Endothelial cell of umbilical vein (primary cell): ENCODE measurements at regions of chr5 and their contacts with region 1.

Region 1: GRCh38 chr5:76582230-76583162 is 40.7 kb downstream of the F2RL2 start:
- DNase-seq: no peak
- H3K4me3 ChIP-seq: no peak overlapping the region
- H3K27ac ChIP-seq: no peak overlapping the region
- H3K4me1 ChIP-seq: no peaks in the 10 kb centered on the region
- H3K27me3 ChIP-seq: peaks cover 4 to 8% of the 10 kb centered on the region in 2 experiments
- CTCF ChIP-seq: no peak
- POLR2A ChIP-seq: no peak

Region 2: GRCh38 chr5:75734913-75735789 is 847.3 kb before region 1 on chr5:
- CTCF ChIA-PET with region 1: interaction called, 4 read pairs
- POLR2A ChIA-PET with region 1: no interaction called
- dilution Hi-C with region 1: no loop called
- intact Hi-C with region 1: loop called (anchors 10 kb)
- DNase-seq: no peak
- H3K4me3 ChIP-seq: no peak overlapping the region
- H3K27ac ChIP-seq: no peak overlapping the region
- H3K4me1 ChIP-seq: no peaks in the 10 kb centered on the region
- H3K27me3 ChIP-seq: peaks cover 3 to 14% of the 10 kb centered on the region in 2 experiments
- CTCF ChIP-seq: peak; percentile 21 to 37
- POLR2A ChIP-seq: no peak

Region 3: GRCh38 chr5:76337953-76338451 is 244.5 kb before region 1 on chr5:
- CTCF ChIA-PET with region 1: interaction called, 5 read pairs
- POLR2A ChIA-PET with region 1: no interaction called
- dilution Hi-C with region 1: no loop called
- intact Hi-C with region 1: loop called (anchors 1 kb)
- DNase-seq: peak; percentile 33
- H3K4me3 ChIP-seq: no peak overlapping the region
- H3K27ac ChIP-seq: no peak overlapping the region
- H3K4me1 ChIP-seq: no peaks in the 10 kb centered on the region
- H3K27me3 ChIP-seq: no peaks in the 10 kb centered on the region
- CTCF ChIP-seq: peak in 1 of 2 donors; percentile 24
- POLR2A ChIP-seq: no peak

Region 4: GRCh38 chr5:76402886-76403765 is 179.4 kb before region 1 on chr5 and contains the start of gene IQGAP2:
- CTCF ChIA-PET with region 1: interaction called, 6 read pairs
- POLR2A ChIA-PET with region 1: no interaction called
- dilution Hi-C with region 1: no loop called
- intact Hi-C with region 1: loop called (anchors 1 kb)
- DNase-seq: peak; percentile 51
- H3K4me3 ChIP-seq: peak within 1 kb of the TSS; percentile 42 to 70 (median 50)
- H3K27ac ChIP-seq: no peak within 1 kb of the TSS
- H3K4me1 ChIP-seq: peaks cover 7% of the 10 kb centered on the region
- H3K27me3 ChIP-seq: peaks cover 34 to 54% of the 10 kb centered on the region in 2 experiments
- CTCF ChIP-seq: peak; percentile 66 to 82
- POLR2A ChIP-seq: no peak
- total RNA-seq, gene IQGAP2: 4.7 and 5.7 TPM in 2 replicates

Region 5: DNA sequence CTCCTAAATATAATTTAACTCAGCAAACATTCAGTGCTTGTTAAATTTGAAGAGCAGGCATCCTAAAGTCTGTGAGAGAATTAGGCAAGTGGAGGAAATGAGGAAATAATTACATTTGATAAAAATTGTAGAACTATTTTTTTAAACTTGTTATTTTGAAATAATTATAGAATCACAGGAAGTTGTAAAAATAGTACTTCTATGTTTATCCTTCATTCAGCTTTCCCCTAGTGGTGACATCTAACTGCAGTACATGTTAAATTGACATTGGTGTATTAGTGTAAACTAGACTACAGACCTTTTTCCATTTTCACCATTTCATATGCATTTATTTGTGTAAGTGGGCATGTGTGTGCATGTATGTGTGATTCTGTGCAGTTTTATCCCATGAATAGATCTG is 10.9 kb before region 1 on chr5:
- CTCF ChIA-PET with region 1: interaction called, 11 read pairs
- POLR2A ChIA-PET with region 1: no interaction called
- dilution Hi-C with region 1: no loop called
- intact Hi-C with region 1: no loop called
- DNase-seq: no peak
- H3K4me3 ChIP-seq: no peak overlapping the region
- H3K27ac ChIP-seq: no peak overlapping the region
- H3K4me1 ChIP-seq: no peaks in the 10 kb centered on the region
- H3K27me3 ChIP-seq: peaks cover 2 to 6% of the 10 kb centered on the region in 2 experiments
- CTCF ChIP-seq: no peak
- POLR2A ChIP-seq: no peak